A673 (cell line): ENCODE measurements at regions of chr21 and their contacts with region 1.

Region 1: DNA sequence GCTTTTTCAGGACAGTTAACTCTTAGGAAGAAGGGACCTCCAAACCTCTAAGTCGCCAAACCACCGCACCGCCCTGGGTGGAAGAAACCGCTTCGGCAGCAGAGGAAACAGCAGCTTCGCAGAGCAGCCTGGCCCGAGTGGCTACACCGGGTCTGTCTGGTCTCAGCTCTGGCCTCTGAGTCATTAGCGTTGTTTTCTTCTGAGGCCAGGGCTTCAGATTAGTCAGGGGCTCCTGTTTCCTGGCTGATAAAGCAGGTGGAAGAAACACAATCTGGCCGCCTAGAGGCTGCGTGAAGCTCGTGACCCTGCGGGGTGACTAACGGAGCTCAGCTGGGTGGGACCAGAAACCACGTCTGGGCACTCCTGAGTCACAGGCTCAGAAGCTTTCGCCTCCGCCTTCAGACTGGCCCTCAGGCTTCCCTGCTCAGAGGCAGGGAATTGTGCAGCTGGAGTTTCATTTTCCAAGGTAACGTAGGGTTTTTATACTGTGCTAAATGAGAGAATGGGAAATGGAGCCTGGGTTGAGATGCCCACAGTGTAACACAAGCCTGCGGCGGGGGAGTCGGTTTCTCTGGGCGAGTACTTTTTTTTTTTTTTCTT is 44.9 kb downstream of the CHAF1B start:
- DNase-seq: no peak
- H3K4me3 ChIP-seq: no peak overlapping the region
- H3K27ac ChIP-seq: no peak overlapping the region
- H3K4me1 ChIP-seq: no peaks in the 10 kb centered on the region
- H3K27me3 ChIP-seq: no peaks in the 10 kb centered on the region
- CTCF ChIP-seq: no peak

Region 2: GRCh38 chr21:36630485-36631206 is 200.6 kb after region 1 on chr21:
- CTCF ChIA-PET with region 1: interaction called, 13 read pairs
- POLR2A ChIA-PET with region 1: no interaction called
- intact Hi-C with region 1: no loop called
- DNase-seq: peak; percentile 66
- H3K4me3 ChIP-seq: no peak overlapping the region
- H3K27ac ChIP-seq: no peak overlapping the region
- H3K4me1 ChIP-seq: no peaks in the 10 kb centered on the region
- H3K27me3 ChIP-seq: no peaks in the 10 kb centered on the region
- CTCF ChIP-seq: peak; percentile 90

Region 3: DNA sequence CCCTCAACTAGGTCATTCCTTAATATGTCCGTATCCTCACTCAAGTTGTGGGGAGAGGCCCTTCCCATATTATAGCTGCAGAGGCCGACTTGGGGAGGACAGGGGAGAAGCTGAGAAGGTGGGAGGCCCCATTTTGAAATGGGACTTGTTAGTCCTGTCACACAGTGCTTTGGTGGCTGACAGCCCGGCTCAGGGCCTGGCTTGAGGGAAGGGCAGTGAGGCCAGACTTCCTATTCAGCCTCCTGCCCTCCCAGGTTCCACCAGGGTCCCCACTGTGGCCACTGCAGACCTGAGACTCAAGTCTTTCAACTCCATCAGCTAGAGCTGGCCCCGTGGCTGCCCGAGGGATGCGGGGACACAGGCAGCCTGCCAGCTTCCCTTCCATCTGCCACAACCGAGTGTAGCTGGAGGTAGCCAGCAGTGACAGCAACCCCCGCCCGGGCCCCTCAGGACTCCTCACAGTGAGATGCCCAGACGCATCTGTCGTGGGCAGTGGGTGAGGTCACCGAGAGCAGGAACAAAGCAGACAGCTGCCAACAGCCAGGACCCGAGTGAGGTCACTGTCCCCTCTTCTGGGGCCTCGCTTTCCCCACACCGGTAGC is 305.8 kb after region 1 on chr21:
- CTCF ChIA-PET with region 1: no interaction called
- POLR2A ChIA-PET with region 1: no interaction called
- intact Hi-C with region 1: no loop called
- DNase-seq: no peak
- H3K4me3 ChIP-seq: no peak overlapping the region
- H3K27ac ChIP-seq: no peak overlapping the region
- H3K4me1 ChIP-seq: no peaks in the 10 kb centered on the region
- H3K27me3 ChIP-seq: no peaks in the 10 kb centered on the region
- CTCF ChIP-seq: no peak